H1 (cell line): ENCODE measurements at regions of chr4 and their contacts with region 1.

Region 1: DNA sequence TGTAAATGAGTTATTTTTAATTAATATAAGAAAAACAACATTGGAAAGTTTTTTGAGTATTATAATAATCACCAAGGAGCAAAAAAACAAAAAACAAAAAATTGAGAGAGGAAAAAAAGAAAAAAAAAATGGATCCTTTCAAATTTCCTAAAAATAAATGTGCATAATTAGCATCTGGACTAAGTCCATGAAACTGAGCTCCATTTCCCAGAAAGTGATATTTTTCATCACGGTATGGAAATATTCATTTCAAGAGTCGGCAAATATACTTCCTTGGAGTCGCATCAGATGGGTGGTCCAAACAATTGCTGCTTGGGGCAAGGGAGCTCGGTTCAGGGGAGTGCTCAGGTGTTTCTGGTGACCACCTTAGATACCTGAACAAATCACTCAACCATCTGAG is 305.1 kb downstream of the LDB2 start:
- DNase-seq: no peak
- H3K4me3 ChIP-seq: no peak overlapping the region
- H3K27ac ChIP-seq: no peak overlapping the region
- H3K4me1 ChIP-seq: peaks cover 0 to 12% (median 5%) of the 10 kb centered on the region in 4 experiments; a peak in 3 of 7 replicates
- H3K27me3 ChIP-seq: no peaks in the 10 kb centered on the region
- CTCF ChIP-seq: no peak
- EP300 ChIP-seq: no peak
- POLR2A ChIP-seq: no peak
- RAD21 ChIP-seq: no peak

Region 2: DNA sequence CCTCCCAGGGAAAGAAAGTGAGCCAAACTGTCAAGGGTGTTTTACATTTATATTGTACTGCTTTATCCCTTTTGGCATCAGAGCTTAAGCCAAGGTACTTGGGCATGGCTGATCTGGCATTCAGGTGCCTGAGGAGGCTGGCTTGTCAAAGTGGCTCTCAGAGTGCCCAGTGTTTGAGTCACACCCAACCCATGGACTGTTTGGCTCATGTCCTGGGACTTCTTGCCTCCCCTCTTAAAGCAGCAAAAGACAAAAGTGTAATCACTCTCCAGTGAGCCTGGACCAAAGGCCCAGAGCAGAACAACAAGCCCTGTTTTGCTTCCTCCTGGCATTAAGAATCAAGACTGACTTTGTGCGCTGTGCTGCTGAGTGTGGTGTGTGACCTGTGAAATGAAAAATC is 55.5 kb before region 1 on chr4:
- CTCF ChIA-PET with region 1: no interaction called
- POLR2A ChIA-PET with region 1: no interaction called
- DNase-seq: no peak
- H3K4me3 ChIP-seq: no peak overlapping the region
- H3K27ac ChIP-seq: no peak overlapping the region
- H3K4me1 ChIP-seq: no peaks in the 10 kb centered on the region
- H3K27me3 ChIP-seq: no peaks in the 10 kb centered on the region
- CTCF ChIP-seq: no peak
- EP300 ChIP-seq: no peak
- POLR2A ChIP-seq: no peak
- RAD21 ChIP-seq: no peak

Region 3: DNA sequence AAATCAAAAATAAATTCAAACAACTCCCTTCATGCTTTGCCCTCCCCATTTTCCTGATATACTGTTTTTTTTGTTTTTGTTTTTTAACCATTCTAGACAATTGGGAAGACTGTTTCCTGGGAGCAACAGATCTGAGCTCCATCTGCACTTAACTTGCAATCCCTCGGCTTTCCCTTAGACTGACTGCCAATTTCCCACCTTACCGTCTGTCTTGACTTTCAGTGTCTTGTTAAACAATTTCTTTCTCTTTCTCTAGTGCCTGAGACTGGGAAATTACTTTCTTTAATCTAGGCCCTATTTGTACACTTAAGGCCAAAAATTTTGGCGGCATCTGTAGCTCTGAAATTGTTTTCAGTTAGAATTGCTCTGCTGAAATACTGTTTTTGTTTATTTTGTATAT is 21.2 kb before region 1 on chr4:
- CTCF ChIA-PET with region 1: no interaction called
- POLR2A ChIA-PET with region 1: no interaction called
- DNase-seq: no peak
- H3K4me3 ChIP-seq: no peak overlapping the region
- H3K27ac ChIP-seq: no peak overlapping the region
- H3K4me1 ChIP-seq: no peaks in the 10 kb centered on the region
- H3K27me3 ChIP-seq: no peaks in the 10 kb centered on the region
- CTCF ChIP-seq: no peak
- EP300 ChIP-seq: no peak
- POLR2A ChIP-seq: no peak
- RAD21 ChIP-seq: no peak

Region 4: GRCh38 chr4:16582532-16582931 is 10.9 kb before region 1 on chr4:
- CTCF ChIA-PET with region 1: interaction called, 18 read pairs
- POLR2A ChIA-PET with region 1: interaction called, 3 read pairs
- DNase-seq: peak; percentile 19 to 78
- H3K4me3 ChIP-seq: no peak overlapping the region
- H3K27ac ChIP-seq: no peak overlapping the region
- H3K4me1 ChIP-seq: no peaks in the 10 kb centered on the region
- H3K27me3 ChIP-seq: no peaks in the 10 kb centered on the region
- CTCF ChIP-seq: peak; percentile 83 to 90 (median 90)
- EP300 ChIP-seq: no peak
- POLR2A ChIP-seq: no peak
- RAD21 ChIP-seq: peak; percentile 79 to 84

Region 5: DNA sequence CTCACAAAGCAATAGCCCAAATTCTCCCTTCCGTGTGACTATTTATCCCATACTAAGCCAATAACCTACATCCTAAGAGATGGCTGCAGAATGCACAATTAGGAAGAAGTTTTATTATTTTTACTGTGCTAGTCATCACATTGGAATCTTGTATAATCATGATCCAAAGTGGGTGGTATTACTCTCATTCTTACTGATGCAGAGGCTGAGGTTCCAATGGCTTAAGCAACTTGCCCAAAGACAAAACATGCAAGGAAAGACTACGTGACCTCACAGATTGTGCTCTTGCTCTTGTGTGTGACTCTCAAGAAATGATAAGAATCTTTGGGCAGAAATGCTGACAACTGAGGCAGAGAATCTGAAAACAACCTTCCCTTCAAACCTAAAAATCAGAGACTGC is 92.8 kb after region 1 on chr4:
- CTCF ChIA-PET with region 1: no interaction called
- POLR2A ChIA-PET with region 1: no interaction called
- DNase-seq: no peak
- H3K4me3 ChIP-seq: no peak overlapping the region
- H3K27ac ChIP-seq: no peak overlapping the region
- H3K4me1 ChIP-seq: peaks cover 0 to 2% (median 0%) of the 10 kb centered on the region in 4 experiments; a peak in 2 of 7 replicates
- H3K27me3 ChIP-seq: no peaks in the 10 kb centered on the region
- CTCF ChIP-seq: no peak
- EP300 ChIP-seq: no peak
- POLR2A ChIP-seq: no peak
- RAD21 ChIP-seq: no peak